CD8-positive, alpha-beta T cell (primary cell): ENCODE measurements at regions of chr1 and their contacts with region 1.

Region 1: DNA sequence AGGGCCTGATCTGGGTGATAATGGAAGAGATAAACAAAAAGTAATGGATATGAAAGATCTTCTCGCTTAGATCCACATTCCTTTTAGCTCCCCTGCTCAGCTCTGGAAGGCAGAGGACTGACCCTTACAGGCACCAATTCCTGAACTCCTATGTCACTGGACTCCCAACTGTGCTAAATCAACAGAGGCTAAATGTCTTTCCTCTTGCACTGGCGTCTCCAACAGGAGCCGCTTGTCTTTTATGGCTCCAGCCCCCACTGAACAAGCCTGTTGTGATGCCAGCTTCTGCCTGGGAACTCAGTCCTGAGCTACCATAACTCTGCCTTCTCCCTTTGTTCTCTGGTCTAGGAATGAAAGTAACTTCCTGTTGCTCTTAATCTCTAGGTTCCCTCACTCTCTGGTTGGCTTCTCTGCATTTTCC is 142.1 kb upstream of the COL11A1 start:
- DNase-seq: no peak
- ATAC-seq: no peak
- H3K4me3 ChIP-seq: no peak overlapping the region
- H3K4me3 Mint-ChIP-seq: no peak overlapping the region
- H3K27ac ChIP-seq: no peak overlapping the region
- H3K27ac Mint-ChIP-seq: no peak overlapping the region
- H3K4me1 ChIP-seq: no peaks in the 10 kb centered on the region
- H3K4me1 Mint-ChIP-seq: no peaks in the 10 kb centered on the region
- H3K27me3 ChIP-seq: no peaks in the 10 kb centered on the region
- H3K27me3 Mint-ChIP-seq: peaks cover 2% of the 10 kb centered on the region
- CTCF ChIP-seq: no peak

Region 2: GRCh38 chr1:103309786-103310185 is 59.3 kb after region 1 on chr1:
- CTCF ChIA-PET with region 1: no interaction called
- POLR2A ChIA-PET with region 1: no interaction called
- intact Hi-C with region 1: loop called in 1 of 2 experiments (anchors 2 kb)
- DNase-seq: no peak
- ATAC-seq: no peak
- H3K4me3 ChIP-seq: no peak overlapping the region
- H3K4me3 Mint-ChIP-seq: no peak overlapping the region
- H3K27ac ChIP-seq: no peak overlapping the region
- H3K27ac Mint-ChIP-seq: no peak overlapping the region
- H3K4me1 ChIP-seq: no peaks in the 10 kb centered on the region
- H3K4me1 Mint-ChIP-seq: no peaks in the 10 kb centered on the region
- H3K27me3 ChIP-seq: no peaks in the 10 kb centered on the region
- H3K27me3 Mint-ChIP-seq: no peaks in the 10 kb centered on the region
- CTCF ChIP-seq: no peak